HEK293T (cell line): ENCODE measurements at regions of chr5 and their contacts with region 1.

Region 1: DNA sequence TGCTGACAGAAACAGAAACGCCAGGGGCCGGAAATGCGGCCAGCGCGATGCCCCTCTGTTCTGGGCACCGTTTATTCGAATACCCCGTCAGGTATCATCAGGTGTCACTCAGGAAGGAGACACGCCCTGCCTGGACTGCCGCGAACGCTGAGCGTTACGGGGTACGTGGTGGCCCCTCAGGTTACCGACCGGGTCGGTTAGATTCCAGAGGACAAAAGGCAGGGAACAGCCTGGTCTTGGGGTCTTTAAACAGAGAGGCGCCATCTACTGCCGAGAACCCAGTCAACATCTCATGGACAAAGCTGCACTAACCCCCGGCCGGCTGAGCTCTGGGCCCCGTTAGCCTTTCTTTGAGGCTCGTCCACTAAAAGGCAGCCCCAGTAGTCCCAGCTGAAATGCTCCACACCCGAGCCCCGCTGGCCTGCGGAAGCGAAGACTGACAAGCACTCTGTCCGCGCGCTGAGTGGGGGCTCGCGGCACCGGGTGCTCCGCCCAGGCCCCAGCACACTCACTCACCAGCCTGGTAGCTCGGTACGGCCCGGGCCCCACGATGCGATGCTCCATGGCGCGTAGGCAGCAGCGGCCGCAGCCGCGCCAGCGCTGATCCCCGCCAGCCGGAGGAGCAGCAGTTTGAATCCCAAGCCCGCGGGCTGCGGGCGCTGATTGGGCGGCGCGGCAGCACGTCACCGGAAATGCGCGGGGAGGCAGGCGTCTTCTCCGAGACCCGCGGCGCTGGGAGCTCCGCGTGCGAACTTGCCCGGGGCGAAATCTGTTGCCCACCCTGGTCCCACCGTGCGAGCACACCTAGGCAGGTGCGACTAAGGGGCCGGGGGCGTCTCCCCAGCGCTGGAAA is at the start of gene DEPDC1B:
- DNase-seq: peak; percentile 88

Region 2: GRCh38 chr5:60487885-60488442 is 211.8 kb before region 1 on chr5:
- CTCF ChIA-PET with region 1: no interaction called
- POLR2A ChIA-PET with region 1: no interaction called
- DNase-seq: peak; percentile 13

Region 3: GRCh38 chr5:60503771-60504170 is 196.0 kb before region 1 on chr5:
- CTCF ChIA-PET with region 1: no interaction called
- POLR2A ChIA-PET with region 1: no interaction called
- DNase-seq: no peak

Region 4: DNA sequence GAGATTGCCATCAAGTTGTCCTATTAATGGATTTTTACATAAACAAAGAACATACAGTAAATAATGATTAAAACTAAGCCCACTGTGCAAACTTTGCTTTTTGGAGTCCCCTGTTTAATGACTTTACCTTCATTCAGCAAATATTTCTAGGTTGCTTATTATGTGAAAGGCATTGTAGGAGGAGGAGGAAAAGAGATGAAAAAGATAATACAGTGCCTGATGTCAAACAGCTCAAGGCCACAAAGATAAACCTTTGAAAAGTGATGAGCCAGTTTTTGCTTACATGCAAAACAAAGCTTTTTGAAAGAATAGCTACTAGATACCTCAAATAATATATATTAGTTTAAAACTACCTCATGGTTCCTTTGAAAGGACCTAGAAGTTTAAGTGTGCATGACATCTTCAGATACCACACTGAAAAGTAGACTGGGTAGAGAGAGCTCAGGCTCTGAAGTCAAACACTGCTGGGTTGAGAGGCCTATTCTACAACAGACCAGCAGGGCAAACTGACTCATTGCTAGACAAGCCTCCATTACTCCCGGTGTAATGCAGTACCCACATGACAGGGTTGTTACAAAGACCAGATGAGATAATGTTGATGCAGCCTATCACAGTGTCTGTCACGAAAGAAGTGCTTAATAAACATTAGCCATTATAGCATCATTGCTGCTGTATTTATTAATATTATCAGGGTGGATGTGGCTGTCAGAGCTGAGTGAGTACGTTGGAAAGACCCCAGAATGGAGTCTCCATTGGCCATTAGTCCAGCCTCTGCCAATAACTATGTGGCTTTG is 11.6 kb before region 1 on chr5:
- CTCF ChIA-PET with region 1: interaction called, 5 read pairs
- POLR2A ChIA-PET with region 1: interaction called, 13 read pairs
- DNase-seq: peak; percentile 53

Region 5: GRCh38 chr5:60710373-60710772 is 10.6 kb after region 1 on chr5:
- CTCF ChIA-PET with region 1: no interaction called
- POLR2A ChIA-PET with region 1: interaction called, 13 read pairs
- DNase-seq: no peak

Region 6: GRCh38 chr5:60843936-60844905 is 144.5 kb after region 1 on chr5 and contains the start of gene ELOVL7:
- CTCF ChIA-PET with region 1: interaction called, 4 read pairs
- POLR2A ChIA-PET with region 1: interaction called, 13 read pairs
- DNase-seq: peak; percentile 76

Region 7: DNA sequence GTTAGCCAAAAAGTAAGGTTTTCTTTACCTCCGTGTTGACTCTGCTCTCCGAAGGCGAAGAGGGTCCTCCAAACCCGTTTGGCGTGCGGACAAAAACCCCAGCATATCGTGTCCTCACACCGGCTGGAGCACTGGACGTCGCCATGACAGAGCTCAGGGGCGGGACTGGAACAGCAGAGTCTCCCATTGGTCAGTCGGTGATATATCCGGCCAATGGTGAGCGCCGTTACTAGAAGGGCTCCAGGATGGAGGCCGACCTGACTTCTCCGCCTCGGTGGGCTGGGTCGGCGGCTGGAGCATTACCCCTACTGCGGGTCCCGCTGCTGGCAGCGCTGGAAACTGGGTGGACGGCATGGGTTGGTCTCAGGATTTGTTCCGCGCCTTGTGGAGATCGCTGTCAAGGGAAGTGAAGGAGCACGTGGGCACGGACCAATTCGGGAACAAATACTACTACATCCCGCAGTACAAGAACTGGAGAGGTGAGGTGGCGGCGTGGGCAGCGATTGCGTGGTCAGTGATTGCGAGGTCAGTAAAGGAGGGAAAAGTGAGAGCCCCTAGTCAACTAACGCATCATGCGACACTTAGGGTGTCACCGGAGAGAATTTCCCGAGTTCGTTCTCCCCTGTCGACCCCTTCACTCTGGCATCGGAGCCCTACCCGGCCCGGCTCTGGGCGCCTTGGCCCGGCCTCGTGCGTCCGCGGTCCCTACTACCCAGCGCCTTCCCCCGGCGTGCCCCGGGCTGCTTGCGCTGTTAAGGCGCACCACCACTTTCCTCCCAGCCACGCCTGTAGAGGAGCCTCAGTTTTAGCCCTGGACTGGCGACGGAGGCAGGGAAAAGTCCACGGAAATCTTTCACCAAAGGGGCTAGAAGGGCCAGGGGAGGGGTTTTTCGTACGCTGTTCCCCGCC is 245.4 kb after region 1 on chr5 and contains the starts of genes ERCC8 and NDUFAF2:
- CTCF ChIA-PET with region 1: no interaction called
- POLR2A ChIA-PET with region 1: interaction called, 10 read pairs
- DNase-seq: peak; percentile 93

Region 8: GRCh38 chr5:61357745-61358144 is 658.0 kb after region 1 on chr5:
- CTCF ChIA-PET with region 1: no interaction called
- POLR2A ChIA-PET with region 1: no interaction called
- DNase-seq: no peak